ENCODE measurements at regions of chr14 and their contacts with region 1.

Region 1: DNA sequence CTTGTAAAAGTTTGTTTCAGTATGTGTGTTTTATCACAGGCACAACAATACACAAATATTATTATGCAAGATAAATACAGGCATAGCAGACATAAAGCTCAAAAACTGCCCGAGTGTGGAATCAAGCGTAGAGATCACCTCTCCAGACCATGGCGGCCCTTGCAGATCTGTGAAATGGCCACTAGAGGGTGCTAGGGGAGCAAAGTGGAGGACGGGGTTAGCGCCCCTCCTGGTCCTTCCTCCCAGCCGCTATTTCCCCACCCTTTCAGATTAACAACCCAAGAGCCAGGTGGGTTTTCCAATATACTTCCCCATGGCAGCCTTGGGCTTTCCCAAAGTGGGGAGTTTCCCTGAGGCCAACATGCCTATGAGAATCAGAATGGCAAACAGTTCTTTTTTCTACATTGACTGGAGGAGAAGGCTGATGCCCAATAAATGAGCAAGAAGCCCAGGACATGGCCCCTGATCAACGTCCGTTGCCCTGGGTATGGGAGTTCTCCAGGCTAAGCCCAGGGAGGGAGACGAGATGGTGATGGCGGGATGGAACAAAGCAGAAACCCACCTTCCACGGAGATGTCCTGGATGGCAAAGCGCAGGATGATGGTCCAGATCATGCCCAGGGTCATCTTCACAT is 67.4 kb downstream of the ACTN1 start:
- DNase-seq: peak; percentile 77 to 89 (median 83)
- H3K4me3 ChIP-seq: no peak overlapping the region
- H3K27ac ChIP-seq: no peak overlapping the region
- H3K4me1 ChIP-seq: no peaks in the 10 kb centered on the region
- H3K27me3 ChIP-seq: no peaks in the 10 kb centered on the region

Region 2: GRCh38 chr14:68359837-68360552 is 551.7 kb before region 1 on chr14:
- CTCF ChIA-PET with region 1: no interaction called
- POLR2A ChIA-PET with region 1: no interaction called
- DNase-seq: no peak
- H3K4me3 ChIP-seq: no peak overlapping the region
- H3K27ac ChIP-seq: no peak overlapping the region
- H3K4me1 ChIP-seq: peaks cover 13 to 32% (median 19%) of the 10 kb centered on the region in 4 experiments
- H3K27me3 ChIP-seq: no peaks in the 10 kb centered on the region

Region 3: GRCh38 chr14:68862954-68863594 is 48.6 kb before region 1 on chr14:
- CTCF ChIA-PET with region 1: interaction called, 14 read pairs
- POLR2A ChIA-PET with region 1: no interaction called
- DNase-seq: peak; percentile 75 to 86 (median 84)
- H3K4me3 ChIP-seq: no peak overlapping the region
- H3K27ac ChIP-seq: no peak overlapping the region
- H3K4me1 ChIP-seq: no peaks in the 10 kb centered on the region
- H3K27me3 ChIP-seq: no peaks in the 10 kb centered on the region

Region 4: DNA sequence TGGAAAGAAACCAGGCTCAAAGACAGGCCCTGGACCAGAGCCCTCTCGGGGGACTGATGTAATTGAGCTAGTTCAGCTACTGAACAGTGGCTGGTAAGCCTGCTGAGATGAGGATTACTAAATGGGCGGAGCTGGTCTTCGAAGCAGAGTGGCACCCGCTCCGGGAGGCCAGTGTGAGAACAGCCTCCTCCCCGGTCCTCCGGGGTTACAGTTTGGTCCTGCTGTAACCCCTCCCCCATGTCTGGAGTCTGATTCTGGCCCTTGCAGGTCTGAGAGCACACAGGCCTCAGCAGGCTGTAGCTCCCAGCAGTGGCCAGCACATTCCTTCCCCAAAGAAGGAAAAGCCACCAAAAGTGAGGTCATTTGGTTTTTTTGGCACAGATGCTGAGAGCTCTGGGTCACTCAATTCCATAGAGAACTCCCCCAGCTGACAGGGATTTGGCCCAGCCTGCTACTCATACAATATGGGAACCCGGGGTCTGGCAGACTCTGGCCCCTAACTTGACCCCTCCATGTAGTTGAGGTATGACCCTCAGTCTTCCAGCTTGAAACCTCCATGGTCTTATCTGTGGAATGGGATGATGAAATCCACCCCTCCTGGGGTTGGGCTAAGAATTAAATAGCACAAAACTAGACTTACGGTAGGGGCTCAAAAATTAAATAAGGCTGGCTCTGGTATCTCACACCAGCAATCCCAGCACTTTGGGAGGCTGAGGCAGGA is 28.3 kb after region 1 on chr14:
- CTCF ChIA-PET with region 1: interaction called, 13 read pairs
- POLR2A ChIA-PET with region 1: no interaction called
- DNase-seq: no peak
- H3K4me3 ChIP-seq: no peak overlapping the region
- H3K27ac ChIP-seq: no peak overlapping the region
- H3K4me1 ChIP-seq: peaks cover 0 to 45% (median 10%) of the 10 kb centered on the region in 4 experiments
- H3K27me3 ChIP-seq: no peaks in the 10 kb centered on the region

Region 5: DNA sequence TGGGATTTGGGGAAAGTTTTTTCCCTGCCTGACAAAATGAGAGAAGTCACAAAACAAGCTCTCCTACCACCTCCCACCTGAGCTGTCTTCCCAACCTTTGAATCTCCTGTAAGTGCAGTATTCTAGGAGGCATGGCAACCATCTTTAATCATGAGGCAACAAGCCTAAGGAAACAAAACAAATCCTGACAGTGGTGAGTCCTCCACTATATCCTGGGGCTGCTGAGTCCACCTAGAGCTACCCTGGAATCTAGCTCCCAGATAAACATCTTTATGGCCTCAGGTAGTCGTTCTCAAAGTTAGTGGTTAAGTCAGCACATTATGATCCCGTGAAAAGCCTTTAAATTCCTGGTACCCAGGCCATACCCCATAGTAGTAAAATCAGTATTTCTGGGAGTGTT is 89.7 kb after region 1 on chr14:
- CTCF ChIA-PET with region 1: interaction called, 14 read pairs
- POLR2A ChIA-PET with region 1: no interaction called
- DNase-seq: no peak
- H3K4me3 ChIP-seq: no peak overlapping the region
- H3K27ac ChIP-seq: no peak overlapping the region
- H3K4me1 ChIP-seq: peaks cover 0 to 2% (median 0%) of the 10 kb centered on the region in 4 experiments
- H3K27me3 ChIP-seq: no peaks in the 10 kb centered on the region

Region 6: DNA sequence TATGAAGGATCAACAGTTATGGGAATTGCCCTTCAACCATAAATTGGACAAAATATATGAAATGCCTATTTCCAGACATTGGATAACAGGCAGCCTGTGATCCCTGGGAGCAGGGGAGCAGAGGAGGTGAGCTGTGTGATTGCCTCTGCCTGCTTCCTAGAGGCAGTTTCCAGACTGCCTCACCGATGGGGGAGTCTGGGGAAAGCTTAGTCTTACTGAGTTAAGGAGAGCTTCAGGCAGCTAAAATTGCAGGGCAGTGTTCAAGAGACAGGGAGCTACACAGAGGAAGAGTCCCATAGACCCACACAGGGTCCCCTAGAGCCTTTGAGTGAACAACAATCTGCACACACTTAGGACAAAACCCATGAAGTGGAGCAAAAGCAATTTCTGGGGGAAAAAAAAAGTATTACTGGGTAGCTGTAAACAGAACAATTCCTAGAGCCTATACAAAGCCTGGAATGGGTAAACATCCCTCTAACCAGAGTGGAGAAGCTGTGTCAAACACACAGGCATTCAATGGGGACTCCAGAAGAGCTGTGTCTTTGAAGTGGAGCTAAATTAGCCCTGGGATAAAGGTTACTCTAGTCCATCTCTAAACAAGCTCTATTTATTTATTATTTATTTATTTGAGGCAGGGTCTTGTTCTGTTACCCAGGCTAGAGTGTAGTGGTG is 115.7 kb after region 1 on chr14:
- CTCF ChIA-PET with region 1: no interaction called
- POLR2A ChIA-PET with region 1: no interaction called
- DNase-seq: no peak
- H3K4me3 ChIP-seq: no peak overlapping the region
- H3K27ac ChIP-seq: no peak overlapping the region
- H3K4me1 ChIP-seq: no peaks in the 10 kb centered on the region
- H3K27me3 ChIP-seq: no peaks in the 10 kb centered on the region

Region 7: GRCh38 chr14:69101331-69101826 is 189.7 kb after region 1 on chr14:
- CTCF ChIA-PET with region 1: interaction called, 51 read pairs
- POLR2A ChIA-PET with region 1: no interaction called
- DNase-seq: peak; percentile 34 to 67 (median 64)
- H3K4me3 ChIP-seq: no peak overlapping the region
- H3K27ac ChIP-seq: peak overlapping the region in 1 of 2 experiments; percentile 0
- H3K4me1 ChIP-seq: no peaks in the 10 kb centered on the region
- H3K27me3 ChIP-seq: no peaks in the 10 kb centered on the region

Measured in common myeloid progenitor, CD34-positive (primary cell).